ENCODE measurements at regions of chr17 and their contacts with region 1.

Region 1: GRCh38 chr17:4565209-4566141 is 5.1 kb upstream of the GGT6 start:
- DNase-seq: peak; percentile 70
- H3K4me3 ChIP-seq: no peak overlapping the region
- H3K27ac ChIP-seq: no peak overlapping the region
- H3K4me1 ChIP-seq: no peaks in the 10 kb centered on the region
- H3K27me3 ChIP-seq: peaks cover 0 to 1% of the 10 kb centered on the region in 2 experiments
- CTCF ChIP-seq: peak; percentile 82 to 84
- POLR2A ChIP-seq: no peak

Region 2: DNA sequence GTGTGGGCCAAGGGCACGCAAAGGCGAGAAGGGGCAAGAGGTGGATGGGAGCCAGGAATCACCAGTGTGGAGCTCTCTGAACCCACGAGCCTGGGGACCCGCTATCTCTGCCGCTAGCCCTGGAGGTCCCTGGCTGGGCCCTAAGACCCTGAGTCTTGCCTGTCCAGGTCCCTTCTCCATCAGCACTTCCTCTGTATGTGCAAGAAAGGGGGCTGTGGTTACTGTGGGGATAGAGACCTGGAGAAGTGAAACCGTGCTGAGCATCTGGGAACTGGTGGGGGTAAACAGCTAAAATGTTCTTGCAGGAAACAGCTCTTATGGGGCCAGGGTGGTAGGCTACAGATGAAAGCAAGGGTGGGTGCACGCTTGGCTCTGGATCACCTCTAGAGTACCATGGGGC is 128.6 kb before region 1 on chr17:
- CTCF ChIA-PET with region 1: no interaction called
- POLR2A ChIA-PET with region 1: no interaction called
- dilution Hi-C with region 1: no loop called
- intact Hi-C with region 1: no loop called
- DNase-seq: no peak
- H3K4me3 ChIP-seq: no peak overlapping the region
- H3K27ac ChIP-seq: no peak overlapping the region
- H3K4me1 ChIP-seq: peaks cover 7% of the 10 kb centered on the region
- H3K27me3 ChIP-seq: no peaks in the 10 kb centered on the region
- CTCF ChIP-seq: no peak
- POLR2A ChIP-seq: no peak

Region 3: DNA sequence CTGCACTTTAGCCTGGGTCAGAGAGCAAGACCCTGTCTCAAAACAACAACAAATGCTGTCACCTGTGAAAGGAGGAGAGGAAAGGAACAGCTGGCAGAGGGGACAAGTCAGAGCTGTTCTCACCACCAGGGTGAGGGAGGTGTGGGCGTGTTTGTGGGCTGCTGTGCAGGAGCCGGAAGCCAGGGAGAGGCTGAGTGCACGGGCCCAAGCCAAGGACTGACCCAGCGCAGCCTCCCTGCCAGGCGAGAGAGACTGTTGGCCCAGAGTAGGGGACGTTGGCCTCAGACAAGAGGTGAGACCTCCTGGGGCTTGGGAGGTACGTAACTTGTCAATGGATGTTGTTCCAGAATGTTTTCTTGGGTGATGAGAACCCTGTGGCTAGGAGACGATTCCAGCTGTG is 56.1 kb before region 1 on chr17:
- CTCF ChIA-PET with region 1: no interaction called
- POLR2A ChIA-PET with region 1: no interaction called
- dilution Hi-C with region 1: no loop called
- intact Hi-C with region 1: no loop called
- DNase-seq: no peak
- H3K4me3 ChIP-seq: no peak overlapping the region
- H3K27ac ChIP-seq: no peak overlapping the region
- H3K4me1 ChIP-seq: peaks cover 25% of the 10 kb centered on the region
- H3K27me3 ChIP-seq: no peaks in the 10 kb centered on the region
- CTCF ChIP-seq: no peak
- POLR2A ChIP-seq: no peak

Region 4: GRCh38 chr17:4540224-4540641 is 25.2 kb before region 1 on chr17:
- CTCF ChIA-PET with region 1: interaction called, 11 read pairs
- POLR2A ChIA-PET with region 1: no interaction called
- dilution Hi-C with region 1: no loop called
- intact Hi-C with region 1: no loop called
- DNase-seq: no peak
- H3K4me3 ChIP-seq: no peak overlapping the region
- H3K27ac ChIP-seq: no peak overlapping the region
- H3K4me1 ChIP-seq: peaks cover 43% of the 10 kb centered on the region
- H3K27me3 ChIP-seq: no peaks in the 10 kb centered on the region
- CTCF ChIP-seq: peak; percentile 48 to 72
- POLR2A ChIP-seq: no peak

Region 5: DNA sequence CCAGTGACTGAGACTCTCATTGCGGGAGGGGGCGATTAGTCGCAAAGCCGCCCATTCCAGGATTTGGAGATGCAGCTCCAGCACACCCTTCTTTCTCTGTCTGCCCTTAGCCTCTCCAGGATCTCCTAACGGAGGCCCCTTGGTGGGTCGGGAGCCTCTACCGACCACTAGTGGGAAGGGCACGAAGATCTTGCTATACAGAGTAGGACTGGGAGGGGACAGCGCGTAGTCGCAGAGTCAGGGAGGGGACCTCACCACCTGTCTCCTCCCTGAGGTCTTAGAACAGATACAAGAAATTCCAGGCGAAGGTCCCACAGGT is 18.3 kb after region 1 on chr17:
- CTCF ChIA-PET with region 1: interaction called, 41 read pairs
- POLR2A ChIA-PET with region 1: no interaction called
- dilution Hi-C with region 1: no loop called
- intact Hi-C with region 1: no loop called
- DNase-seq: peak; percentile 18
- H3K4me3 ChIP-seq: peak overlapping the region in 1 of 3 experiments; percentile 37
- H3K27ac ChIP-seq: no peak overlapping the region
- H3K4me1 ChIP-seq: no peaks in the 10 kb centered on the region
- H3K27me3 ChIP-seq: peaks cover 29 to 35% of the 10 kb centered on the region in 2 experiments
- CTCF ChIP-seq: peak; percentile 15 to 51
- POLR2A ChIP-seq: no peak

Region 6: DNA sequence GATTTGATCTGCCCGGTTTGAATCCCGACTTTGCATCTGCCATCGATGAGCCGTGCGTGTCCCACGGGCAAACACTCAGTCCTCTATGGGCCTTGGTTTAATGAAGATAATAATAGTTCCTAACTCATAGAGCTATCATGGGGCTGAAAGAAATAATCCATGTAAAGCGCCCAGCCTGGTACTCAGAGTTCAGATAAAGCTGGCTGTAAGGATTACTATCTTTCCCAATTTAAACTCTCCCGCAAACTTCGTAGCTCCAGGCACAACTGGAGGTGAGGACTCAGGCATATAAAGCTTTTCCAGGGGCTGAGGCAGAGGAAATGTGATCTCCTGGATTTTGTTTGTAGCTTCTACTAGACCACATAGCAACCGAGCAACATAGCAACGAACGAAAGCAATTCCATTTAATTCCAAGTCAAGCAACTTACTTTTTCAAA is 59.7 kb after region 1 on chr17:
- CTCF ChIA-PET with region 1: interaction called, 213 read pairs
- POLR2A ChIA-PET with region 1: no interaction called
- dilution Hi-C with region 1: no loop called
- intact Hi-C with region 1: loop called (anchors 1 kb)
- DNase-seq: no peak
- H3K4me3 ChIP-seq: no peak overlapping the region
- H3K27ac ChIP-seq: no peak overlapping the region
- H3K4me1 ChIP-seq: no peaks in the 10 kb centered on the region
- H3K27me3 ChIP-seq: peaks cover 12 to 16% of the 10 kb centered on the region in 2 experiments
- CTCF ChIP-seq: no peak
- POLR2A ChIP-seq: no peak

Region 7: DNA sequence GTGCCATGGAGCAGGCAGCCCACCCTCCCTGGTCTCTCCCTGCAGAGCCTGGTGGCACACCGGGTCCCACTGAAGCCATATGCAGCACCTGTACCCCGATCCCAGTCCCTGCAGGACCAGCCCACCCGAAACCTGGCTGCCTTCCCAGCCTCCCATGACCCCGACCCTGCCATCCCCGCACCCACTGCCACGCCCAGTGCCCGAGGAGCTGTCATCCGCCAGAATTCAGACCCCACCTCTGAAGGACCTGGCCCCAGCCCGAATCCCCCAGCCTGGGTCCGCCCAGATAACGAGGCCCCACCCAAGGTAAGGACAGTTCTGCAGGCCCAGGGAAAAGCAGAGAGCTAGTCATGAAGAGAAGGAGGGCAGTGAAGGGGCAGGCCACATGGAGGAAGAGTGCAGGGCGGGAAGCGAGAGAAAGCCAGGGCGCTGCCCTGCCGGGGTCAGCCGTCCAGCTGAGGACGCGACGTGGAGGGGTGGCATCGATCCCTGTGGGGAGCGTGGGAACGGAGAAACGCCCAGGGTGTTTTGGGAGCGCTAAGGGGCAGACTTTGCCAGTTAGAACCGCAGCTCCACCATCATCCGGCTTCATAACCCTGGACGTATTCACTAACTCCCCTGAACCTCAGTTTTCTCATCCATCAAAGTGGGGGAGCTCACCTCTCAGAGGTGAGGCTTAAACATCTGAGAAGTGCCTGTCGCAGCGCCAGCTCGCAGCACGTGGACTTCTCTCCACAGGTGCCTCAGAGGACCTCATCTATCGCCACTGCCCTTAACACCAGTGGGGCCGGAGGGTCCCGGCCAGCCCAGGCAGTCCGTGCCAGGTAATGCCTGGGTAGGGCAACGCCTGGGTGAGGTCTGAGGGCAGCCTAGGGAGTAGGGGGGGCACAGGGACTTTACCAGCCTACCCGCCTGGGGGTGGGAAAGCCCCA is 326.2 kb after region 1 on chr17:
- CTCF ChIA-PET with region 1: no interaction called
- POLR2A ChIA-PET with region 1: no interaction called
- dilution Hi-C with region 1: no loop called
- intact Hi-C with region 1: loop called (anchors 1 kb)
- DNase-seq: no peak
- H3K4me3 ChIP-seq: no peak overlapping the region
- H3K27ac ChIP-seq: no peak overlapping the region
- H3K4me1 ChIP-seq: no peaks in the 10 kb centered on the region
- H3K27me3 ChIP-seq: no peaks in the 10 kb centered on the region
- CTCF ChIP-seq: no peak
- POLR2A ChIP-seq: no peak

Measured in endothelial cell of umbilical vein (primary cell).